ENCODE measurements at regions of chr10 and their contacts with region 1.

Region 1: DNA sequence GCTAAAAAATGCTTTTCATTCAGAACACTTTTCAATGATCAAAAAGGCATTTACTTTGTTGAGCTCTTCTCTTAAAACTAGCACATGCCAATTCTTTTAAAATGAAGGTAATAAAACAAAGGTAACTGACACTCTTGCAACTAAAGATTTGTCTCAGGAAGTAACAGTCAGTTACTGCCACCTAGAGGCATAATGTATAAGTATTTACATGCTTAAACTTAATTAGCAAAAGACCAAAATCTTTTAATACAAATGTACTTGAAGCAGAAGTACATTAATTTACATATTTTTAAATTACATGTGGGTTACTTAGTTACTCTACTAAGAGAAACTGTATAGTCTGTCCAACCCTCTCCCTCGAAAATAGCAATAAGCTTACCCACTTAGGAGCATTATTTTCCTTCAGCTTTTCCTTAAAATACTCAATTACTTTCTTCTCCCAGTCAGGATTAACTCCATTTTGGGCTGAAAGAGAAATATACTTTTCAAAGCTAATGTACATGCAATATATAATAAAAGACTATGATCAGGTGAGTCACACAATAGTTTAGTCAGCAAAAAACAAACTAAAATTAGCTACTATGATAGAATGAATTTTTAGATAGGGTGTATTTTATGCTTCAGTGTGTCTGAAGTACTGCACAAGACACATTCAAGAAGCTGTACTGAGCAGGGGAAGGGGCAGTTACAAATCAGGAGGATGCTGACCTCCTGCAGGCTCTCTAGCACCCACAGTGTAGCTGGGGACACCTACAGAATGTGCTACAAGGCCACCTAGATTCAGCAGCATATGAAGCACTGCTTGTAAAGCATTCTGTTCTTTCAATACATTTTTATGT is 13.0 kb downstream of the MCMBP start:
- DNase-seq: no peak
- H3K4me3 ChIP-seq: no peak overlapping the region
- H3K27ac ChIP-seq: no peak overlapping the region
- H3K4me1 ChIP-seq: peaks cover 19% of the 10 kb centered on the region
- H3K27me3 ChIP-seq: no peaks in the 10 kb centered on the region
- CTCF ChIP-seq: peak; percentile 44 to 62 (median 59)
- POLR2A ChIP-seq: no peak

Region 2: GRCh38 chr10:119355930-119356329 is 503.7 kb before region 1 on chr10:
- intact Hi-C with region 1: no loop called
- DNase-seq: no peak
- H3K4me3 ChIP-seq: no peak overlapping the region
- H3K27ac ChIP-seq: no peak overlapping the region
- H3K4me1 ChIP-seq: no peaks in the 10 kb centered on the region
- H3K27me3 ChIP-seq: no peaks in the 10 kb centered on the region
- CTCF ChIP-seq: no peak
- POLR2A ChIP-seq: no peak

Region 3: GRCh38 chr10:119750391-119751230 is 109.0 kb before region 1 on chr10:
- intact Hi-C with region 1: loop called (anchors 10 kb)
- DNase-seq: no peak
- H3K4me3 ChIP-seq: no peak overlapping the region
- H3K27ac ChIP-seq: no peak overlapping the region
- H3K4me1 ChIP-seq: no peaks in the 10 kb centered on the region
- H3K27me3 ChIP-seq: no peaks in the 10 kb centered on the region
- CTCF ChIP-seq: peak; percentile 78 to 84 (median 79)
- POLR2A ChIP-seq: no peak

Measured in vagina (tissue), 2 donors.